ENCODE measurements at regions of chr18 and their contacts with region 1.

Region 1: DNA sequence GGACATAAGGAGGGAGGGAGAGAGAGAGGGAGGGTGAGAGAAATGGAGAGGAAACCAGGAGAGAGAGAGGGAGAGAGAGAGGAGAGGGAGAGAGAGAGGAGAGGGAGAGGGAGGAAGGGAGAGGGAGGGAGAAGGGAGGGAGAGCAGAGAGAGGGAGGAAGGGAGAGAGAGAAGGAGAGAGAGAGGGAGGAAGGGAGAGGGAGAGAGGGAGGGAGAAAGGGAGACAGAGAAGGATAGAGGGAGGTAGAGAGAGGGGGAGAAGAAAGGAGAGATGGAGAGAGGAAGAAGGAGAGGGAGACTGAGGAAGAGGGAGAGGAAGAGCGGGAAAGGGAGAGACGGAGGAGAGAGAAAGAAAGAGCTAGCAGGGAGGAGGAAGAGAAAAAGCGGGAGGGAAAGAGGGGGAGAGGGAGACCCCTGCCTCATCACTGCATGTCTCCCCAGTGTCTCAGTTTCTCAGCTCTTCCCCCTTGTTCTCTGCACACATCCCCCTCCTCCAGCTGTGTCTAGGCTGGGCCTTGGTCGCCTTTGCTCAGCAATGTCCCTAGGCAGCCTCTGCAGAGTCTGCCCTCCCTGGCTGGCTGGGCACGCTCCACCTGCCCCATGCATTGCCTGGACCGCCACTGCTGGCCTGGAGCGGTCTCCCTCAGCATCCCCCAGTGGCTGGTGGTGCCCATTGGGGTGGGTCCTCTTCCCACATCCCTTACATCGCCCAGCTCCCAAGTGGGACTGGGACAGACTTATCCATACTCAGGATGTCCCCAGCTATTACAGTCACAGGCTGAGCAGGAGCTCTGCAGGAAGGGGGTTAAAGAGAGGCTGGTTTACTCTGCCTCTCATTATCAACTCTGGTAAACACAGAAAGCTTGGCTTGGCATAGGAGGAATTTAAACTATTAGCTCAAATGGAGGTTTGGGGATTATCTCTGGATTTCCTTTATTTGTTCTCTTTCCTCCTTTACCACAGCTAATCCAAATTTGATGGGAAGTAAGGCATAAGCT is 85.7 kb upstream of the APCDD1 start:
- DNase-seq: no peak
- H3K4me3 ChIP-seq: no peak overlapping the region
- H3K4me3 Mint-ChIP-seq: no peak overlapping the region
- H3K27ac ChIP-seq: peak overlapping the region in 1 of 2 donors; percentile 30
- H3K27ac Mint-ChIP-seq: peak overlapping the region in 3 of 7 donors; percentile 31 to 83 (median 57)
- H3K4me1 ChIP-seq: peaks cover 29 to 30% of the 10 kb centered on the region in 2 donors
- H3K4me1 Mint-ChIP-seq: peaks cover 22% of the 10 kb centered on the region
- H3K27me3 ChIP-seq: no peaks in the 10 kb centered on the region
- H3K27me3 Mint-ChIP-seq: no peaks in the 10 kb centered on the region
- CTCF ChIP-seq: no peak

Region 2: DNA sequence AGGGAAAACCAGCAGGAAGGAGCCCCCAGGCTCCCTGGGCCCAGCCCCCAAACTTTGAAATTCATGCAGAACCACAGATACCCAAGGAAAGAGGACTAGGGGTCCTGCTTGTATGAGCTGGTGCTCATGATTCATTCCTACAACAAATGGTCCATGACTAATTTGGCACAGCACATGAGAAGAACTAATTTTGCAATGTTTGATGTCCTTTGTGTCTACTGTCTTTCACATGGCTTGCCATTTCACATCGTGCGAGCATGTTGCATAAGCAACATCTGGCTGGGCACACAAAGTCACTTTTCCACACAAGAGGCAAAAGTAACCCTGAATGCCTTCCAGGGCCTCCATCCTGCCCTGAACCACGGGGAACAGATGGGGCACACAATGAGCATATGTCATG is 63.9 kb before region 1 on chr18:
- intact Hi-C with region 1: no loop called
- DNase-seq: peak; percentile 77 to 88 (median 83)
- H3K4me3 ChIP-seq: no peak overlapping the region
- H3K4me3 Mint-ChIP-seq: no peak overlapping the region
- H3K27ac ChIP-seq: peak overlapping the region in 1 of 2 donors; percentile 6
- H3K27ac Mint-ChIP-seq: peak overlapping the region in 5 of 7 donors; percentile 16 to 79 (median 63)
- H3K4me1 ChIP-seq: peaks cover 36 to 40% of the 10 kb centered on the region in 2 donors
- H3K4me1 Mint-ChIP-seq: peaks cover 42% of the 10 kb centered on the region
- H3K27me3 ChIP-seq: no peaks in the 10 kb centered on the region
- H3K27me3 Mint-ChIP-seq: no peaks in the 10 kb centered on the region
- CTCF ChIP-seq: no peak

Region 3: DNA sequence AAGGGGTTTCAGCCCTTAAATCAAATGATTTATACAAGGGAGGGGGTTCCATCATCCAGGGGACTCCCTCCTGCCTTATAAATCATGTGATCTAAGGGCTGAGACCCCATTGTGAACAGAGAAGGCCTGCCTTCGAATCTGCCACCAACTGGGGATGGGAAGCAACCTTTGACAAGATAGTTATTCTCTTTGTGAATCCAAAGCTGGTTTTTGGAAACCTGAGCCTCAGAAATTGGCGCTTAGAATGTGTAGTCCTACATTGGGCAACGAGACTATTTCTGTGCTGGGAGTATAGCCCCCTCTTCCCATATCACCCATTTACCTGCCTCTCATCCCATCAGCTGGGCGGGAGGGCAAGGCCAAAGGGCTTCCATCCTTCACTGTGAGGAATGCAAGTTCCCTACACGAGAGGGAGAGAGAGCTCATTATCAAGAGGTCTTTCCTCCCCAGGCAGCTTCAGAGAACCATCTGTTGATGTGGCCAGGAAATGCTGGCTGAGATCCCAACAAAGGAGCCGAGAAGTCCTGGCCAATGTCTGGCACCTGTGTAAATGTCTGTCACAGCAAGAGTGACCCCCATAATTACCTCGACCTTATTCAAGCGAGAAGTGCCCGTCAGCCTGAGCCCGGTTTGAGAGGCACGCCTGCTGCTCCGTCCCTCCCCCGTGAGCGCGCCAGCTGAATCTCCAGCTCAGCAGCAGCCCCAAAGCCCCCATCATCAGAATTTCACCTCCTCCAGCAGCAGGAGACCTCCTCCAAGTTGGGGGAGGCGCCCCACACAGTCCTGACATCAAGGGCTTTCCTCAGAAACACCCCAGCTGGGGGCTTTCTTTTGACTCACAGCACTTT is 37.3 kb after region 1 on chr18:
- intact Hi-C with region 1: loop called in 1 of 2 experiments (anchors 5 kb)
- DNase-seq: no peak
- H3K4me3 ChIP-seq: no peak overlapping the region
- H3K4me3 Mint-ChIP-seq: no peak overlapping the region
- H3K27ac ChIP-seq: no peak overlapping the region
- H3K27ac Mint-ChIP-seq: no peak overlapping the region
- H3K4me1 ChIP-seq: peaks cover 15 to 19% of the 10 kb centered on the region in 2 donors
- H3K4me1 Mint-ChIP-seq: peaks cover 14% of the 10 kb centered on the region
- H3K27me3 ChIP-seq: no peaks in the 10 kb centered on the region
- H3K27me3 Mint-ChIP-seq: peaks cover 2 to 6% (median 4%) of the 10 kb centered on the region in 3 donors
- CTCF ChIP-seq: no peak

Measured in CD14-positive monocyte (primary cell).